HepG2 (cell line): ENCODE measurements at regions of chr9 and their contacts with region 1.

Region 1: DNA sequence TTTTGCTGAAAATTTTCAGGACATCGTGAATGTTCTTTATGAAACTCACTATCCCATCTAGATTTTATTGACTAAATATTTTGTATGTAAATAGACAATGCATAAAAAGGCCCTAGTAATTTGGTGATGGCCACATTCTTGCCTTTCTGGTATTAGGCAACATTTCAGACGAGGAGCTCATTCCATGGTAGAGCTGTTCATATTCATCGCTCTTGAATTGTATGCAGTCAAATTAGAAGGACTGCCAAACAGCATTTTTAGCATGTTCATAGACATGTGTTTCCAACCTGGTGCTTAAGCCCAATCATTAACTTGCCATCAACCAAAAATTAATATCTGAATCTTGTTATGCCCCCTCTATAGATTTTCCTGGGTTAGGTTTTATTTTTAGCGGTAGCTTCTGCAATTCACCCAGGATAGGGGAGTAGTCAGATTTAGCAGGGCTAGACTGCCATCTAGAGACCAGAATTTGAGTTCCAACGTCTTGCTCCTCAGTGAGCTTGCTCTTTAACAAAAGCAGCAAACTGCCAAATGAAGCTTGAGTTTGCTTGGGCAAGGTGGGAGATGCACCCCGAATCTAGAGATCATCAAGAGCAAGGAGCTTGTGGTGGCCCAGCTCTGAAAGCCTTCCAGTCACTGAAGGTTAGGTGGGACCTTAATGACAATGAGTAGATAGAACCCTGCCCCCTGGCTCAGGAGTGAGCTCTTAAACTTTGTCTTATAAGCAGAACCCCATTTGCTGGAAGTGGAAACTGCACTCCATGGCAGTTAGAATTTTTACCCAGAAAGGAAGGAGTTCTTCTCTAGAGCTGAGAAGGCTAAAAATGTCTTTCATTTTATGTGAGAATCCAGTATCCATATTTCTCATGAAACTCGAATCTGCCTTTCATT is 456.2 kb downstream of the RASEF start:
- DNase-seq: peak; percentile 69
- ATAC-seq: peak; percentile 91
- H3K4me3 ChIP-seq: no peak overlapping the region; a peak in 1 of 6 replicates
- H3K27ac ChIP-seq: peak overlapping the region; percentile 24
- H3K4me1 ChIP-seq: peaks cover 55% of the 10 kb centered on the region
- H3K27me3 ChIP-seq: no peaks in the 10 kb centered on the region
- CTCF ChIP-seq: peak; percentile 84
- EP300 ChIP-seq: no peak
- POLR2A ChIP-seq: no peak
- RAD21 ChIP-seq: peak; percentile 76

Region 2: DNA sequence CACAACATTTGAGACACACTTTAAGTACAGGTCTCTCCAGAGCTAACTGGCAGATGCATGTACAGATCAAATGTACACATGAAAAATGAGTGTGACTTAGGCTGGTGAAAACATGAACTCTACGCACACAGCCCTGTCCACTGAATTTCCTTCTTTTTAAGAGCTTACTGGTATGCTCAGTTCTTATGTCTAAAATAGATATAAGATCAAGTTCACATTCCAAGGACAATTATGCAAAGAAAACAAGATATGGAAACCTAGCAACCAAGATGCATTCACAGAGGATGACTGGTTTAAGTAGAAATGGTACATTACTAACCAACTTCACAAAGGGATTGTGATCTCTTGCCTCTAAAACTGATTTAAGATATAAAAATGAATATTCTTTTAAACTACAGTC is 974.1 kb before region 1 on chr9:
- CTCF ChIA-PET with region 1: no interaction called
- POLR2A ChIA-PET with region 1: no interaction called
- in situ Hi-C with region 1: no loop called
- intact Hi-C with region 1: loop called (anchors 5 kb)
- DNase-seq: no peak
- ATAC-seq: no peak
- H3K4me3 ChIP-seq: no peak overlapping the region
- H3K27ac ChIP-seq: no peak overlapping the region
- H3K4me1 ChIP-seq: peaks cover 91% of the 10 kb centered on the region
- H3K27me3 ChIP-seq: no peaks in the 10 kb centered on the region
- CTCF ChIP-seq: no peak
- EP300 ChIP-seq: no peak
- POLR2A ChIP-seq: no peak
- RAD21 ChIP-seq: no peak

Region 3: GRCh38 chr9:82105729-82106128 is 501.0 kb before region 1 on chr9:
- CTCF ChIA-PET with region 1: no interaction called
- POLR2A ChIA-PET with region 1: no interaction called
- in situ Hi-C with region 1: no loop called
- intact Hi-C with region 1: loop called (anchors 5 kb)
- DNase-seq: peak; percentile 10
- ATAC-seq: peak; percentile 76
- H3K4me3 ChIP-seq: no peak overlapping the region
- H3K27ac ChIP-seq: no peak overlapping the region
- H3K4me1 ChIP-seq: no peaks in the 10 kb centered on the region
- H3K27me3 ChIP-seq: no peaks in the 10 kb centered on the region
- CTCF ChIP-seq: peak; percentile 45
- EP300 ChIP-seq: no peak
- POLR2A ChIP-seq: no peak
- RAD21 ChIP-seq: no peak

Region 4: DNA sequence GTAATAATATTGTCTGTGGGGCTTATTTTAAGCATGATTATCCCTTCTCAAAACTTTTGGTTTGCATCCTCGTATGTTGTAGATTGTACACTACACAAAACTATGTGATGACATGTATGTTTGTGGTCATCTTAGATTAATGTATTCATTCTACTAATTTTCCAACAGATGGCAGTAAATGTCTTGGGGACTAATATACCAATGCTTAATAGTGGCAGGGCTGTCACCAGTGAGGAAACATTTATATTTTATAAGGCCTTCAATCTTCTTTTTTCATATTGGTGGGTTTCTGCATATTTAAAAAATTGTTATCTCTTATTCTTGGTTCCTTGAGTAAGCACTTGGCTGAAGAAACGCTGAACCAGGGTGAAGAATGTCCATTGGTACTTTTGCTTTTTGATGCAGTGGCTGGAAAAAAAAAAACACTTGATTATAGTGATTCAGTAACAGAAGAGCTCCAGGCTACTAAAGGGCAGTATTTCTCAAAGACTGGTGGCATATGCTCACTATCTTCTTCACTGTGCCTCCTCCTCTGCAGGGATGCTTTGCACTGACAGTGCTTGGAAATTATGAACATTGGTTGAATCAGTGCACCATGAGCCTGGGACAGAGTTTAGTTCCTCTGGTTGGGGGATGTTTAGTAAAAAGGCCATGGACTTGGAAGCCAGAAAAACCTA is 74.1 kb before region 1 on chr9:
- CTCF ChIA-PET with region 1: interaction called, 20 read pairs
- POLR2A ChIA-PET with region 1: no interaction called
- in situ Hi-C with region 1: no loop called
- intact Hi-C with region 1: loop called (anchors 1 kb)
- DNase-seq: peak; percentile 13
- ATAC-seq: peak; percentile 46; the same call in 2 of the 3 replicates
- H3K4me3 ChIP-seq: no peak overlapping the region
- H3K27ac ChIP-seq: no peak overlapping the region
- H3K4me1 ChIP-seq: peaks cover 6% of the 10 kb centered on the region; the same call in 1 of the 2 replicates
- H3K27me3 ChIP-seq: no peaks in the 10 kb centered on the region
- CTCF ChIP-seq: peak; percentile 57
- EP300 ChIP-seq: no peak
- POLR2A ChIP-seq: no peak
- RAD21 ChIP-seq: no peak

Region 5: GRCh38 chr9:82584349-82584863 is 22.3 kb before region 1 on chr9:
- CTCF ChIA-PET with region 1: no interaction called
- POLR2A ChIA-PET with region 1: interaction called, 23 read pairs
- in situ Hi-C with region 1: no loop called
- intact Hi-C with region 1: loop called (anchors 1 kb)
- DNase-seq: no peak
- ATAC-seq: no peak
- H3K4me3 ChIP-seq: no peak overlapping the region
- H3K27ac ChIP-seq: peak overlapping the region; percentile 67
- H3K4me1 ChIP-seq: peaks cover 99% of the 10 kb centered on the region
- H3K27me3 ChIP-seq: no peaks in the 10 kb centered on the region
- CTCF ChIP-seq: no peak
- EP300 ChIP-seq: no peak
- POLR2A ChIP-seq: no peak
- RAD21 ChIP-seq: no peak